Activated CD4-positive, alpha-beta memory T cell treated with anti-CD3 and anti-CD28 coated beads for 36 hours (primary cell): ENCODE measurements at regions of chr2 and their contacts with region 1.

Region 1: DNA sequence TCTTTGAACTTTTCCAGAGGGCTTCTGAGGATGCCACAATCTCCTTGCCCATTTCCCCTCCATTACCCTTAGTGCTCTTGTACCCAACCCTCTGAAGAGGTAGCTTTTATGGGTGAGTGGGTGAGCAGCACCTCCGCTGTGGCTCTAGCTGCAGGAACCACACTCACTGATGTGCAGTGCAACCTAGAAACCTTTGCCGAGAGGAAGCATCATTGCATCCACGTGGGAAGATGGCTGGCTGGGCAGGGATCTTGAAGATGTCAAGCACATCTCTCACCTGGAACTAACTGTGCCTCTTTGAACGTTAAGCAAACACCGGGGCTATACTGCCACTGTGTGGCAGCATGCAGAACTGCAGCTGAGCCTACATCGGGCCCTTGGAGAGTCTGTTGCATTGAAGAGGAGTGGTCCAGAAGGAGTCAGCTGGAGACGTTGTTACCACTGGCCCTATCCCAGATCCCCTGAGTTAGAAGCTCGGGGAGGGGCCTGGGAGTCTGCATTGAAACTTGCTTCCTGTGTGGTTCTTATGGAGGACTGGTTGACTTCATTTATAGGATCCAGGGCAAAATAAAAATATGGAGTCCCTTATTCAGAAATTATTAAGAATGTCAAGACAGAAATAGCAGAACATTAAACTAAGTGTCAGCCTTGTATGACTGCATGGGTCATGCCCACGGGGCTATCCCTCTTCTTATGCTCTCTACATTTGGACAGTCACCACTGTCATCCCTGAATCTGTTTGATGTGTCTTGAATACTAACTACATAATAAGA is 28.7 kb downstream of the IGFBP5 start:
- DNase-seq: peak; percentile 79
- H3K4me3 Mint-ChIP-seq: no peak overlapping the region
- H3K27ac Mint-ChIP-seq: no peak overlapping the region
- H3K4me1 Mint-ChIP-seq: no peaks in the 10 kb centered on the region
- H3K27me3 Mint-ChIP-seq: peaks cover 3% of the 10 kb centered on the region

Region 2: GRCh38 chr2:216170076-216170763 is 496.4 kb before region 1 on chr2:
- CTCF ChIA-PET with region 1: no interaction called
- POLR2A ChIA-PET with region 1: no interaction called
- intact Hi-C with region 1: loop called (anchors 10 kb)
- DNase-seq: no peak
- H3K4me3 Mint-ChIP-seq: no peak overlapping the region
- H3K27ac Mint-ChIP-seq: peak overlapping the region; percentile 11
- H3K4me1 Mint-ChIP-seq: peaks cover 51% of the 10 kb centered on the region
- H3K27me3 Mint-ChIP-seq: no peaks in the 10 kb centered on the region

Region 3: GRCh38 chr2:216519154-216519762 is 147.4 kb before region 1 on chr2:
- CTCF ChIA-PET with region 1: interaction called, 171 read pairs
- POLR2A ChIA-PET with region 1: no interaction called
- intact Hi-C with region 1: loop called (anchors 1 kb)
- DNase-seq: peak; percentile 42
- H3K4me3 Mint-ChIP-seq: no peak overlapping the region
- H3K27ac Mint-ChIP-seq: no peak overlapping the region
- H3K4me1 Mint-ChIP-seq: no peaks in the 10 kb centered on the region
- H3K27me3 Mint-ChIP-seq: no peaks in the 10 kb centered on the region

Region 4: GRCh38 chr2:216651351-216651881 is 15.2 kb before region 1 on chr2:
- CTCF ChIA-PET with region 1: interaction called, 14 read pairs
- POLR2A ChIA-PET with region 1: no interaction called
- intact Hi-C with region 1: no loop called
- DNase-seq: no peak
- H3K4me3 Mint-ChIP-seq: no peak overlapping the region
- H3K27ac Mint-ChIP-seq: no peak overlapping the region
- H3K4me1 Mint-ChIP-seq: no peaks in the 10 kb centered on the region
- H3K27me3 Mint-ChIP-seq: peaks cover 4% of the 10 kb centered on the region